CD4-positive, alpha-beta T cell (primary cell): ENCODE measurements at regions of chr4 and their contacts with region 1.

Region 1: GRCh38 chr4:26936284-26937065 is 75.8 kb downstream of the STIM2 start:
- DNase-seq: peak in 2 of 14 experiments; percentile 14 to 35
- ATAC-seq: peak; percentile 44
- H3K4me3 ChIP-seq: no peak overlapping the region
- H3K4me3 Mint-ChIP-seq: peak overlapping the region; percentile 5
- H3K27ac ChIP-seq: no peak overlapping the region
- H3K27ac Mint-ChIP-seq: peak overlapping the region; percentile 48
- H3K4me1 ChIP-seq: peaks cover 12% of the 10 kb centered on the region
- H3K4me1 Mint-ChIP-seq: peaks cover 86% of the 10 kb centered on the region
- H3K27me3 ChIP-seq: no peaks in the 10 kb centered on the region
- H3K27me3 Mint-ChIP-seq: no peaks in the 10 kb centered on the region
- CTCF ChIP-seq: no peak

Region 2: GRCh38 chr4:26048378-26048882 is 888.0 kb before region 1 on chr4:
- CTCF ChIA-PET with region 1: no interaction called
- POLR2A ChIA-PET with region 1: no interaction called
- intact Hi-C with region 1: no loop called
- DNase-seq: no peak
- ATAC-seq: no peak
- H3K4me3 ChIP-seq: no peak overlapping the region
- H3K4me3 Mint-ChIP-seq: no peak overlapping the region
- H3K27ac ChIP-seq: no peak overlapping the region
- H3K27ac Mint-ChIP-seq: no peak overlapping the region
- H3K4me1 ChIP-seq: no peaks in the 10 kb centered on the region
- H3K4me1 Mint-ChIP-seq: no peaks in the 10 kb centered on the region
- H3K27me3 ChIP-seq: no peaks in the 10 kb centered on the region
- H3K27me3 Mint-ChIP-seq: peaks cover 7% of the 10 kb centered on the region
- CTCF ChIP-seq: no peak

Region 3: DNA sequence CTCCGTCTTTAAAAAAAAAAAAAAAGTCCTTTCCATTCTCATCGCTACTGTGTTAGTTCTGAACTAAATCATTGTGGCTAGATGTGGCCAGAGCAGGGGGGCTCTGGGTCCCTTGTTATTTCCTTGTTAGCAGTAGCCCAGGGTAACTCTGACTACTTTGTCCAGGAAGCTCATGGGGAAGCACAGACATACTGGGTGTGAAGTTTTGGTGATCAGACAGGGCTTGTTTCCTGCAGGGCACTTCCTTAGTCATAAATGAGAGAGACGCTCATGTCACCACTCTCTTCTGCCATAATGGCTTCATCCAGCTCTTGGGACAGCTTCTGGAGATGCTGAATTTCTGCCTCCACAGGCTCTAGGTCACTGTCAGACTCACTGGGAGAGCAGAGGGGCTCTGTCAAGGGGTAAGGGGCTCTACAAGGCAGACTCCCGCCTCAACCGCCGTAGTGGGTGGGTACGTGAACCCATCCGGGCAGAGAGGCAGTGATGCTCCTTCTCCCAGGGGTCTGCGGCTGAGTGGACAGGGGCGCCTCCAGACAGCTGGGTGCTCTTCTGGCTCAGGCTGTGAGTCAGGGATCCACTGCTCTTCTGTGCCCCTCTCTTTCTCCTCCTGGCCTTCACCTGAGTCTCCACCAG is 63.0 kb before region 1 on chr4:
- CTCF ChIA-PET with region 1: no interaction called
- POLR2A ChIA-PET with region 1: no interaction called
- intact Hi-C with region 1: no loop called
- DNase-seq: peak in 11 of 14 experiments; percentile 25 to 91 (median 47)
- ATAC-seq: peak; percentile 92
- H3K4me3 ChIP-seq: no peak overlapping the region
- H3K4me3 Mint-ChIP-seq: peak overlapping the region; percentile 62
- H3K27ac ChIP-seq: peak overlapping the region; percentile 24 to 49
- H3K27ac Mint-ChIP-seq: peak overlapping the region; percentile 68
- H3K4me1 ChIP-seq: peaks cover 39% of the 10 kb centered on the region
- H3K4me1 Mint-ChIP-seq: peaks cover 86% of the 10 kb centered on the region
- H3K27me3 ChIP-seq: no peaks in the 10 kb centered on the region
- H3K27me3 Mint-ChIP-seq: no peaks in the 10 kb centered on the region
- CTCF ChIP-seq: no peak

Region 4: GRCh38 chr4:26896636-26897035 is 39.8 kb before region 1 on chr4:
- CTCF ChIA-PET with region 1: interaction called, 5 read pairs
- POLR2A ChIA-PET with region 1: no interaction called
- intact Hi-C with region 1: loop called in 1 of 2 experiments (anchors 5 kb)
- DNase-seq: no peak
- ATAC-seq: no peak
- H3K4me3 ChIP-seq: no peak overlapping the region
- H3K4me3 Mint-ChIP-seq: no peak overlapping the region
- H3K27ac ChIP-seq: no peak overlapping the region
- H3K27ac Mint-ChIP-seq: no peak overlapping the region
- H3K4me1 ChIP-seq: peaks cover 4% of the 10 kb centered on the region
- H3K4me1 Mint-ChIP-seq: peaks cover 83% of the 10 kb centered on the region
- H3K27me3 ChIP-seq: no peaks in the 10 kb centered on the region
- H3K27me3 Mint-ChIP-seq: no peaks in the 10 kb centered on the region
- CTCF ChIP-seq: no peak

Region 5: GRCh38 chr4:26964994-26965393 is 28.5 kb after region 1 on chr4:
- CTCF ChIA-PET with region 1: no interaction called
- POLR2A ChIA-PET with region 1: no interaction called
- intact Hi-C with region 1: loop called in 1 of 2 experiments (anchors 5 kb)
- DNase-seq: no peak
- ATAC-seq: no peak
- H3K4me3 ChIP-seq: no peak overlapping the region
- H3K4me3 Mint-ChIP-seq: no peak overlapping the region
- H3K27ac ChIP-seq: no peak overlapping the region
- H3K27ac Mint-ChIP-seq: peak overlapping the region; percentile 1
- H3K4me1 ChIP-seq: no peaks in the 10 kb centered on the region
- H3K4me1 Mint-ChIP-seq: peaks cover 64% of the 10 kb centered on the region
- H3K27me3 ChIP-seq: no peaks in the 10 kb centered on the region
- H3K27me3 Mint-ChIP-seq: no peaks in the 10 kb centered on the region
- CTCF ChIP-seq: no peak